Ascending aorta (tissue), 2 donors: ENCODE measurements at regions of chr10 and their contacts with region 1.

Region 1: GRCh38 chr10:98446661-98447221 is at the start of gene HPS1:
- DNase-seq: peak in 1 of 2 donors; percentile 90
- H3K4me3 ChIP-seq: peak within 1 kb of the TSS; percentile 74 to 78
- H3K27ac ChIP-seq: peak within 1 kb of the TSS; percentile 93 to 95
- H3K4me1 ChIP-seq: peaks cover 0 to 6% of the 10 kb centered on the region in 2 donors
- H3K27me3 ChIP-seq: no peaks in the 10 kb centered on the region
- CTCF ChIP-seq: no peak
- total RNA-seq, gene HPS1: 42.7 TPM

Region 2: GRCh38 chr10:98269072-98269912 is 177.4 kb before region 1 on chr10:
- intact Hi-C with region 1: loop called (anchors 5 kb)
- DNase-seq: peak; percentile 83 to 97
- H3K4me3 ChIP-seq: peak overlapping the region; percentile 57 to 68
- H3K27ac ChIP-seq: peak overlapping the region; percentile 91 to 98
- H3K4me1 ChIP-seq: peaks cover 5 to 32% of the 10 kb centered on the region in 2 donors
- H3K27me3 ChIP-seq: no peaks in the 10 kb centered on the region
- CTCF ChIP-seq: no peak

Region 3: DNA sequence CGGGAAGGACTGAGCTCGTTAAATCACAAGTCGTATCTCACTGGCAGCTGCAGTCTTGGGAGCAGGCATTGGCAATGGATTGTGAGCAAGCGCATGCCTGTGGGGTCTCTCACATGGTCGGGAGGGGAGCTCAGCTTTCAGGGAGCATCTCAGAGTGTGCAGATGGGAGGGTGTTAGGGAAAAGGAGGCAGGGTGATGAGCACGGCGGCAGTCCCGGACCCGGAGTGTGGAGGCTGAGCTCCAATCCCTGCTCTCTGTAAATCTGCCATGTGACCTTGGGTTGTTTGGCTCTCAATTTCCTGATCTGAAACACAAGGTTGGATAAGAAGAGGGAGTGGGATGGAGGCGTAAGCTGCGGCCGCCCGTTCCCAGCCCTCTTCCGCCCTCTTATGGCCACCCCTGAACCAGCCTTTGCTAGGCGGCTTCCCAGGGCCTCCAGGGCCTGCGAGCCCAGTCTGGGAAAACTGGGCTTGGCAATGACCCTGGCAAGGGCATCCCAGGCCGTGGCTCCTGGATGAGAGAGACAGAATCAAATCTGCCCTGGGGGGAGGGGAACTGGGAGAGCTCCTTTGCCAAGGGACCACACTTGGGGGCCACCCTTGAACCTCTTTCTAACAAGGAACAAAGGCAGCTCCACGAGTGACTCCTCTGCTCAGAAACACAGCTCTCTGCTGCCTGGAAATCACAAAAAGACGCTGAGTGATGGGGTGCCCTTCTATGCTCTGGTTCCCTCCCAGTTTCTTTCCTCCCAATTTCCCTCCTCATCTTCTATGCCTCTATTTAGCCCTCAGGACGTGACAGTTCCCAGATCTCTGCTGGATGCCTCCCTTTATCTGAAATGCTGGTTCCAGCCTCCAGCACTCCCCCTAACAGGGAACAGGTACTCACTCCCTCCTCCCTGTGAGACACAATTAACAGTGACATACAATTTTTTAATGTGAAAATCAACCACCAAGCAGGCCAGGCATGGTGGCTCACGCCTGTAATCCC is 137.1 kb before region 1 on chr10:
- intact Hi-C with region 1: loop called (anchors 5 kb)
- DNase-seq: peak in 1 of 2 donors; percentile 85
- H3K4me3 ChIP-seq: peak overlapping the region in 1 of 2 donors; percentile 45
- H3K27ac ChIP-seq: no peak overlapping the region
- H3K4me1 ChIP-seq: peaks cover 0 to 6% of the 10 kb centered on the region in 2 donors
- H3K27me3 ChIP-seq: no peaks in the 10 kb centered on the region
- CTCF ChIP-seq: peak; percentile 73 to 89 (median 86)

Region 4: GRCh38 chr10:98414932-98415730 is 31.6 kb before region 1 on chr10 and contains the start of gene PYROXD2:
- intact Hi-C with region 1: loop called (anchors 2 kb)
- DNase-seq: peak; percentile 61 to 95
- H3K4me3 ChIP-seq: peak within 1 kb of the TSS; percentile 59 to 84
- H3K27ac ChIP-seq: peak within 1 kb of the TSS; percentile 69 to 72
- H3K4me1 ChIP-seq: peaks cover 3 to 7% of the 10 kb centered on the region in 2 donors
- H3K27me3 ChIP-seq: no peaks in the 10 kb centered on the region
- CTCF ChIP-seq: peak in 1 of 3 experiments; percentile 2
- total RNA-seq, gene PYROXD2: 5.6 TPM

Region 5: DNA sequence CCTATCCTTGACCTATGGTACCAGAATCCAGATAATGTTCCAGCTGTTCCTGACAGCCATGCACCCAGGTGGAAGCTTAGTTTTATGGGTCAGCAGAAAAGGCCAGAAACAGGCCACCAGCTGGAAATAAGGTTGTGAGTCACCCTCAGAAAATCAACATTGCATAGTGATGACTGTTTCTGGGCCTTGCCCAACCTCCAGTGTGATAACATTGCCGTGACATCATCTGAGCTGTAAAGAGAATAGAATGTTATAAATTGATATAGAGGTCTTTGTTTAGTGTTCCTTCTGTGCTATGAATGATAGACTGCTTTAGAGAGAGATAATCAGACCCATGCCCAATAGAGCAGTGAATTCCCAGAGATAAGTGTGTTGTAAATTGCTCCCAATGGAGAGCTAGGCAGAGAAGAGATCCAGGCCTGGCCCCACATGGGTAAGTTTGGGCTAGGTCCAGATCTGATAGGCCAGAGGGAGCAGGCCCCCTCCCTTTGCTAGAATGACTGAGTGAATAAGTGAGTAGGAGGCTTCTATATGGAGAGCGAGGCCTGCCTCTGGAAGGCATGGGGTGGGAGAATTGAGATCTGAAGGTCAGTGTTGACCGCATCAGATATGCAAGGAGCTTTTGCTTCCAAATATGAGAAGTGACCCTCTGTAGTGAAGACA is 14.2 kb after region 1 on chr10:
- intact Hi-C with region 1: loop called (anchors 1 kb)
- DNase-seq: peak in 1 of 2 donors; percentile 85
- H3K4me3 ChIP-seq: no peak overlapping the region
- H3K27ac ChIP-seq: peak overlapping the region; percentile 27 to 73
- H3K4me1 ChIP-seq: peaks cover 3 to 9% of the 10 kb centered on the region in 2 donors
- H3K27me3 ChIP-seq: no peaks in the 10 kb centered on the region
- CTCF ChIP-seq: no peak

Region 6: DNA sequence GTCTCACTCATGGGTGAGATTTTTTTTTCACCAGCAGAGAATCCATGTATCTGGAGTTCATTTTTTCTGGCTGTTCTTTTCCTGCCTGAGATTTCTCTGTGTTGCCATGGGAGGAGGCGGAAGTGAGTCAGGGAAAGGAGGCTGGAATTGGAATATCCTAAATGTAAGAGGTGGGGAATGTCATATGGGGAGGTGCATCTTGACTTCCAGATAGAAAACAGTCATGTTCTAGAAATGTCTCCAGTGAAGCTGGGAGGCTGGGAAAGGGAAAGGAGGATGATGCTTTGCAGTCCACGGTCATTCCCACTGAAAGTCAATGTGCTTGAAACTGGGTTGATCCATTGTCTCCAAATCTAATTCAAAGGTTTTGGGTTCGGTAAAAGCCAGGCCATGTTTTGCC is 39.7 kb after region 1 on chr10:
- intact Hi-C with region 1: no loop called
- DNase-seq: no peak
- H3K4me3 ChIP-seq: no peak overlapping the region
- H3K27ac ChIP-seq: no peak overlapping the region
- H3K4me1 ChIP-seq: no peaks in the 10 kb centered on the region
- H3K27me3 ChIP-seq: no peaks in the 10 kb centered on the region
- CTCF ChIP-seq: no peak

Region 7: GRCh38 chr10:98577578-98577977 is 130.8 kb after region 1 on chr10:
- intact Hi-C with region 1: no loop called
- DNase-seq: no peak
- H3K4me3 ChIP-seq: no peak overlapping the region
- H3K27ac ChIP-seq: no peak overlapping the region
- H3K4me1 ChIP-seq: no peaks in the 10 kb centered on the region
- H3K27me3 ChIP-seq: no peaks in the 10 kb centered on the region
- CTCF ChIP-seq: no peak

Region 8: GRCh38 chr10:99430451-99431189 is 983.9 kb after region 1 on chr10 and contains the start of gene GOT1:
- intact Hi-C with region 1: loop called (anchors 5 kb)
- DNase-seq: peak; percentile 92 to 98
- H3K4me3 ChIP-seq: peak within 1 kb of the TSS; percentile 72 to 96
- H3K27ac ChIP-seq: peak within 1 kb of the TSS; percentile 74 to 77
- H3K4me1 ChIP-seq: peaks cover 7 to 10% of the 10 kb centered on the region in 2 donors
- H3K27me3 ChIP-seq: no peaks in the 10 kb centered on the region
- CTCF ChIP-seq: no peak
- total RNA-seq, gene GOT1: 4.4 TPM